ENCODE measurements at regions of chr6 and their contacts with region 1.

Region 1: DNA sequence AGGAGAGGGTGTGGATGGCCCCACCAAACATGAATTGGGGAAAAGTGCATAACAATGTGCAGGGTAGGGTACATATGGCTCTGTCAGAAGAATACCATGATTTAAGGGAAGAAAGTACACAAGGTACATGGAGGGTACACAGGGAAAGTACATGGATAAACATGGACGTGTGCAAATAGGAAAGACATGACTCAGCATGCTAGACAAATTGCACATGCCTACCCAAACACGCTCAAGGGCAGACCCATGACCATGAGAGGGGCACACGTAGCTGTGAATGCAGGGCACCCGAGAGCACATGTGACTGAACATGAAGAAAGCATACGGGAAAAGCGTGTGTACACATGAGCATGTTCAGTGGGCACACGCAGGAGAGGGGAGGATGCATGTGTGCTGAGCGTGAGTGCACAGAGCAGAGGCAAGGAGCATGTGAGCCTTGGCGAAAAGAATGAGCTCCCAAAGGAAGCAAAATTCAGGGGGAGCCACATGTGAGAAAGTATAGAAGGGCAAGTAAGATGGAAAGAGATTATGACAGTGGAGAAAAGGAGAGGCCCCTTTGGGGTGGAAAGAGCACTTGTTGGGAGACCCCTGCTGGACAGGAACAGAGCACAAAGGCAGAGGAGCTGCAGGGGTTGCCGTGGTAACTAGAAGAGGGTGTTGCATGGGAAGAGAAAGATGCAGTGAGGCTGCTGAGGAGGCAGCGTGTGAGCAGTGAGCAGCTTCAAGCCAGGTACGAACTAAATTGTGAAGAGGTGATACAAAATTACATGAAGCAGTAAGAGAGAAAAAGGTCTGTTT is 17.8 kb downstream of the OR2H2 start:
- DNase-seq: peak; percentile 69
- H3K4me3 ChIP-seq: no peak overlapping the region
- H3K27ac ChIP-seq: no peak overlapping the region
- H3K4me1 ChIP-seq: peaks cover 0 to 8% of the 10 kb centered on the region in 2 experiments; a peak in 1 of 4 replicates
- H3K27me3 ChIP-seq: no peaks in the 10 kb centered on the region
- CTCF ChIP-seq: peak; percentile 43; the same call in 1 of the 2 replicates
- EP300 ChIP-seq: no peak
- RAD21 ChIP-seq: no peak

Region 2: DNA sequence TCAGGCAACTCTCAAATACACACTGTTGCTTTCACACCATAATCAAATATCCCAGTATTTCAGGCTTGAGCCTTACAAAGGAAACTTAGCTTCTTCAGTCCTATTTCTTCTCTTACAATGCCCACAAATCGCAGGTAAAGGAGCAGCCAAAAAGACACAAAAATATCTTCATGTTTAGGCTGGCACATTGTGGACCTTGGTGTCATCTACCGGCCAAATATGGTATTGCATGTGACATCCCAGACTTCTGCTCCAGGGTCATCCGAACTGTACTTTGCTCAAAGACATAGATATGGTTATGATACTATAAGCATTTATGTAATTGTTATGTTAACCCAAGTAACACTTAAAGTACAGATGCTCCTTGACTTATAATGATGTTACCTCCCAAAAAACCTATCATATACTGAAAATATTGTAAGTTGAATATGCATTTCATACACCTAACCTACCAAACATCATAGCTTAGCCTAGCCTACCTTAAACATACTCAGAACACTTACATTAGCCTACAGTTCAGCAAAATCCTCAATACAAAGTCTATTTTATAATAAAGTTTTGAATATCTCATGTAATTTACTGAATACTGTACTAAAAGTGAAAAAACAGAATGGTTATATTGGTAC is 13.2 kb before region 1 on chr6:
- CTCF ChIA-PET with region 1: interaction called, 22 read pairs
- POLR2A ChIA-PET with region 1: no interaction called
- DNase-seq: peak; percentile 54
- H3K4me3 ChIP-seq: no peak overlapping the region; a peak in 1 of 4 replicates
- H3K27ac ChIP-seq: no peak overlapping the region
- H3K4me1 ChIP-seq: no peaks in the 10 kb centered on the region; a peak in 1 of 4 replicates
- H3K27me3 ChIP-seq: peaks cover 22% of the 10 kb centered on the region; the same call in 1 of the 2 replicates
- CTCF ChIP-seq: peak; percentile 98
- EP300 ChIP-seq: no peak
- RAD21 ChIP-seq: peak; percentile 90

Region 3: GRCh38 chr6:29627755-29628418 is 25.1 kb after region 1 on chr6:
- CTCF ChIA-PET with region 1: interaction called, 12 read pairs
- POLR2A ChIA-PET with region 1: interaction called, 5 read pairs
- DNase-seq: peak; percentile 94
- H3K4me3 ChIP-seq: peak overlapping the region; percentile 54 to 74
- H3K27ac ChIP-seq: peak overlapping the region; percentile 50 to 74; a peak in 3 of 4 replicates
- H3K4me1 ChIP-seq: peaks cover 16 to 20% of the 10 kb centered on the region in 2 experiments; a peak in 2 of 4 replicates
- H3K27me3 ChIP-seq: no peaks in the 10 kb centered on the region
- CTCF ChIP-seq: no peak
- EP300 ChIP-seq: no peak
- RAD21 ChIP-seq: no peak